Ovary (tissue), 10 donors: ENCODE measurements at regions of chr4 and their contacts with region 1.

Region 1: DNA sequence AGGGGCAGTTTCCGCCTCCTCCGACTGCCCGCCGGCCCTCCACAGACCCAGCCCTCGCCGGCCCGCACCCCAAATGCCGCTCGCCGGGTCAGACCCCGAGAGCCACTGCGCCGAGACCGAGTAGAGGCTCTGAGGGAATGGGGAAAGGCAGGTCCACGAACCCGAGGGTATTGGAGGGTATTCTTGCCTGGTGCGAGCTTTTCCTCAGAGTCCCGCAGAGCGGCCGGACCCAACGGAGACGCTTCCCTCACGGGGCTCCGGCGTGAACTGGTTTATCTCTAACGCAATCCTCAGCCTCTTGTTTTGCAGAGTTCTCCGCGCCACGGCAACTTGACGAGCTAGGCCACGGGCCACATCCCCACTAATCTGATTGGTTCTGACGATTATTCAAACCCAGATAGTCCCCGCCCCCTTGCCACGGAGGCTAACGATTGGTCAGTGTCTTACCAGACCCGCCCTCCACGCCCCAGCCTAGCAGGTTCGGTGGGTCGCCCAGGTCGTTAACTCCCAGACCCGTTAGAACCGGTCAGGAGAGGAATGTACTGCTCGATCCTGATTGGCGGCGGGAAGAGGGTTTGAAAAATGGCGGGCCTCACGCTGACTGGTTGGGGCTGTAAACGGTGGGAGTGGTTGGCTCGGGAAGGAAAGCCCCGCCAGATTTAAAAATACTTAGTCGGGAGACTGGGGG is at the start of gene HMGB2:
- DNase-seq: peak; percentile 100
- H3K4me3 ChIP-seq: peak within 1 kb of the TSS; percentile 83
- H3K27ac ChIP-seq: peak within 1 kb of the TSS; percentile 92 to 100
- H3K4me1 ChIP-seq: peaks cover 2% of the 10 kb centered on the region
- H3K27me3 ChIP-seq: no peaks in the 10 kb centered on the region
- CTCF ChIP-seq: peak in 1 of 3 donors; percentile 29
- EP300 ChIP-seq: no peak
- POLR2A ChIP-seq: peak; percentile 96
- total RNA-seq, gene HMGB2: 47.2 to 131 (median 63.5) TPM

Region 2: DNA sequence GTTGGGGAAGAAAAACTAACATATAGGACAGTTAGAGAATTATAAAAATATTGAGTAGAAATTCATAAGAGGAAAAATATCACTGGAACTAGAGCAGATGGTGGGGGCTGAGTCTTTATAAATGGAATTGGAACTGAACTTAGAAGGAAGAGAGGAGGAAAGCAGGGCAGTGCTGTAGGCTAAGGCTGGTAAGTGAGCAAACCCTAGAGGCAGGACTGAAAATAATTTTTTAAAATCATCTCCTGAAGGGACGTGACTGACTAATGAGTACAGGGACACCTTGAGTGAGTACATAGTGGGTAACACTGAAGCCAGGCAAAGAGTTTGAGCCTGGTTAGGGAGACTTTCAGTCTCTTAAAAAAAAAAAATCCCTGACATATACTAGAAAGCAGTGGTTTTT is 102.3 kb before region 1 on chr4:
- intact Hi-C with region 1: no loop called
- DNase-seq: no peak
- H3K4me3 ChIP-seq: no peak overlapping the region
- H3K27ac ChIP-seq: no peak overlapping the region
- H3K4me1 ChIP-seq: peaks cover 4% of the 10 kb centered on the region
- H3K27me3 ChIP-seq: no peaks in the 10 kb centered on the region
- CTCF ChIP-seq: no peak
- EP300 ChIP-seq: no peak
- POLR2A ChIP-seq: no peak

Region 3: GRCh38 chr4:173370477-173371291 is 36.5 kb after region 1 on chr4 and contains the start of gene SAP30:
- intact Hi-C with region 1: loop called in 3 of 4 experiments (anchors 1 to 5 kb)
- DNase-seq: peak; percentile 98 to 100 (median 99)
- H3K4me3 ChIP-seq: peak within 1 kb of the TSS; percentile 67
- H3K27ac ChIP-seq: peak within 1 kb of the TSS; percentile 76 to 92
- H3K4me1 ChIP-seq: peaks cover 6% of the 10 kb centered on the region
- H3K27me3 ChIP-seq: no peaks in the 10 kb centered on the region
- CTCF ChIP-seq: no peak
- EP300 ChIP-seq: no peak
- POLR2A ChIP-seq: peak; percentile 93
- total RNA-seq, gene SAP30: 14.8 to 32.3 (median 17.1) TPM

Region 4: GRCh38 chr4:173420324-173420752 is 86.1 kb after region 1 on chr4:
- intact Hi-C with region 1: no loop called
- DNase-seq: no peak
- H3K4me3 ChIP-seq: no peak overlapping the region
- H3K27ac ChIP-seq: no peak overlapping the region
- H3K4me1 ChIP-seq: no peaks in the 10 kb centered on the region
- H3K27me3 ChIP-seq: no peaks in the 10 kb centered on the region
- CTCF ChIP-seq: peak in 1 of 3 donors; percentile 31
- EP300 ChIP-seq: no peak
- POLR2A ChIP-seq: no peak